HepG2 (cell line): ENCODE measurements at regions of chr15 and their contacts with region 1.

Region 1: DNA sequence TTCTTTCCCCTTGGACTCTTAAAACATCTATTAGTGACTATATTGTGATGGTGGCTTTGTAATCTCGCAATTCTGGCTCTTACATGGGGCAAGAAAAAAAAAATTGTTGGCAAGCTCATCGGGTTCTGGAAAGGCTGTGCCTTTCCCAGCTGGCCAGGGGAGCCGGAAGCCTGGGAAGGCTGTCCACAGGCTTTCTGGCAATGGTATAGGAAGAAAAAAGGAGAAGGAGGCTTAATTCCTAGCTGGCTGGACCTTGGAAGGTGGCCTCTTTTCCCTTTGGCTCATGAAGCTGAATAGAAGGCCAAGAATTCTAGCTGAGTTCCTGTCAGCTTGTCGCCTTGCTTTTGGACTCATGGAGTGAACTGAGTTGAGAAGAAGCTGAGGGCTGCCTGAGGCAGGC is 243.5 kb upstream of the SEMA6D start:
- DNase-seq: no peak
- ATAC-seq: no peak
- H3K4me3 ChIP-seq: no peak overlapping the region
- H3K27ac ChIP-seq: no peak overlapping the region
- H3K4me1 ChIP-seq: no peaks in the 10 kb centered on the region
- H3K27me3 ChIP-seq: no peaks in the 10 kb centered on the region
- CTCF ChIP-seq: no peak
- EP300 ChIP-seq: no peak
- POLR2A ChIP-seq: no peak
- RAD21 ChIP-seq: no peak

Region 2: GRCh38 chr15:47206358-47206978 is 267.4 kb before region 1 on chr15:
- CTCF ChIA-PET with region 1: no interaction called
- POLR2A ChIA-PET with region 1: no interaction called
- in situ Hi-C with region 1: no loop called
- intact Hi-C with region 1: no loop called
- DNase-seq: no peak
- ATAC-seq: no peak
- H3K4me3 ChIP-seq: no peak overlapping the region
- H3K27ac ChIP-seq: no peak overlapping the region
- H3K4me1 ChIP-seq: no peaks in the 10 kb centered on the region
- H3K27me3 ChIP-seq: no peaks in the 10 kb centered on the region
- CTCF ChIP-seq: no peak
- EP300 ChIP-seq: no peak
- POLR2A ChIP-seq: no peak
- RAD21 ChIP-seq: no peak

Region 3: DNA sequence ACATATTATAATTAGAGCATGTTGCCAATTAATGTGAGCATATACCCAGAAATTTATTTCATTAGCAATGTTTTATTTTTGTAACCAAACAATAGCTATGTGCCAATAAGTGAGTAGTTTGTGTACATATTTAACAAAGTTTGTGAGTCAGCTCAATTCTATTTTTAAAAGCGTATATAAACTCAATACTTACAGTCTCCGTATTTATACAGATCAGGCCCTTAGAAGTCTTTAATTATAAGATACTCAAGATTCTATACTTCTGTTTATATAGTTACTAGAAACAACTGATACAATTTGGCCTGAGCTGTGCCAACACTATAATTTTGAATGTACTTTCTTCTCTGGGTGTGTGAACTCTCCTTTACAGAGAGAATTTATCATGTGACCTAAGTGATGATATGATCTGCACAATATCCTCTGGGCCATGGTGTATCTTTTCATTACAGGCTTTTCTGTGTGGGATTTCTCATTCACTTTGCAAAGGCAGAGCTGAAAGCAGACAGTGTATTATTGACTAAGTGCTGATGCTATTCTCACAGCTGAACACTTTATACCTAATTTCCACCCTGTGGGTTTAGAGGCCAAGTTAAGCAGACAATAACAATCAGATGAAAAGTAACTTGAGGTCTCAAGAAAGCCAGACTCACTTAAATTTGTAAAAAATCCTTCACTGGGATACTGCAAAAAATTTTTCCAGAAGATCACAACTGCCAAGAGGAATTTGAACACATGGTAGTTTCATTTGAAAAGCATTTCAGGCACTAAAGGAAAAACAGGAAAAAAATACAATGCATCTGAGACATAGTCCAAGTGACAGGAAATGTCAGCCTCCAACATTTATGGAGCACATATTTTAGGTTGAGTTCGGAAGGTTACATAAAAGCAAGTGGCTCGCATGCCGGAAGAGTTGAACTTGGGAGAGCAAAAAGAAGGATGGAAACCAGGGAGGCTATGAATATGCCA is 34.4 kb before region 1 on chr15:
- CTCF ChIA-PET with region 1: no interaction called
- POLR2A ChIA-PET with region 1: no interaction called
- in situ Hi-C with region 1: no loop called
- intact Hi-C with region 1: no loop called
- DNase-seq: no peak
- ATAC-seq: no peak
- H3K4me3 ChIP-seq: no peak overlapping the region
- H3K27ac ChIP-seq: no peak overlapping the region
- H3K4me1 ChIP-seq: no peaks in the 10 kb centered on the region
- H3K27me3 ChIP-seq: no peaks in the 10 kb centered on the region
- CTCF ChIP-seq: no peak
- EP300 ChIP-seq: no peak
- POLR2A ChIP-seq: no peak
- RAD21 ChIP-seq: no peak

Region 4: GRCh38 chr15:47534673-47535072 is 60.8 kb after region 1 on chr15:
- CTCF ChIA-PET with region 1: no interaction called
- POLR2A ChIA-PET with region 1: no interaction called
- in situ Hi-C with region 1: no loop called
- intact Hi-C with region 1: loop called (anchors 10 kb)
- DNase-seq: no peak
- ATAC-seq: no peak
- H3K4me3 ChIP-seq: no peak overlapping the region
- H3K27ac ChIP-seq: no peak overlapping the region
- H3K4me1 ChIP-seq: no peaks in the 10 kb centered on the region
- H3K27me3 ChIP-seq: no peaks in the 10 kb centered on the region
- CTCF ChIP-seq: no peak
- EP300 ChIP-seq: no peak
- POLR2A ChIP-seq: no peak
- RAD21 ChIP-seq: no peak

Region 5: DNA sequence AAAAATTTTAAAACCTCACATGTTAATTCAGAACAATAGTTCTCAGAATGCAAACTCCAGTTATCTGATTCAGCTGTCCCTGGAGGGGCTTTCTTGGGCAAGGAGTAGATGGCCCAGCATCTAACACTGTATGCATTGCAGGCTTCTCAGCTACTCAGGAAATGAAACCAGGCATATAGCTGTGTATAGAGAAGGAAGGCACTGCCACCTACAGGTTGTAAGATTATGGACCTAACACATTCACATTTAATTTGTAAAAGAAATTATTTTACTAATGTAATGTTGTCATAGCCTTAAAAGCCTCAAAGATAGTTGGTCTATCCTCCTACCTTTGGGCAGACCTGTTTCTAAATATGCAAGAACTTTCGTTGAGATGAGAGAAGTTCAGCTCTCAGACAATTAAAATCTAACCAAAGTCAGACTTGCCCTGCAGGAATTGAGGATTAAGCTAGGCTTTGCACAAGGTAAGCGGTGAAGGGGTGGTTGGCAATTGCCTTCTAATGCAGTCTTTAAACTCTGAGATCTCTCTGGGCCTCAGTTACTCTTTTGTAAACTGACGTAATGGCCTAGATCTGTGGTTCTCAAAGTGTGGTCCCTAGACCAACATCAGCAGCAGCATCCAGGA is 514.2 kb after region 1 on chr15:
- CTCF ChIA-PET with region 1: interaction called, 6 read pairs
- POLR2A ChIA-PET with region 1: no interaction called
- in situ Hi-C with region 1: no loop called
- intact Hi-C with region 1: loop called (anchors 1 kb)
- DNase-seq: peak; percentile 35
- ATAC-seq: peak; percentile 90
- H3K4me3 ChIP-seq: no peak overlapping the region
- H3K27ac ChIP-seq: no peak overlapping the region
- H3K4me1 ChIP-seq: no peaks in the 10 kb centered on the region
- H3K27me3 ChIP-seq: no peaks in the 10 kb centered on the region
- CTCF ChIP-seq: peak; percentile 60
- EP300 ChIP-seq: no peak
- POLR2A ChIP-seq: no peak
- RAD21 ChIP-seq: no peak; the same call in 1 of the 2 replicates